Dendritic cell treated with granulocyte-macrophage colony-stimulating factor and Interleukin-4, amounts not matched to agents 40 ng/mL and 50 ng/mL, for 4 days (primary cell): ENCODE measurements at regions of chr17 and their contacts with region 1.

Region 1: GRCh38 chr17:62963289-62963688 is 2.7 kb upstream of the TANC2 start:
- H3K4me3 Mint-ChIP-seq: no peak overlapping the region
- H3K27ac Mint-ChIP-seq: no peak overlapping the region
- H3K4me1 Mint-ChIP-seq: peaks cover 22% of the 10 kb centered on the region
- H3K27me3 Mint-ChIP-seq: peaks cover 14% of the 10 kb centered on the region

Region 2: DNA sequence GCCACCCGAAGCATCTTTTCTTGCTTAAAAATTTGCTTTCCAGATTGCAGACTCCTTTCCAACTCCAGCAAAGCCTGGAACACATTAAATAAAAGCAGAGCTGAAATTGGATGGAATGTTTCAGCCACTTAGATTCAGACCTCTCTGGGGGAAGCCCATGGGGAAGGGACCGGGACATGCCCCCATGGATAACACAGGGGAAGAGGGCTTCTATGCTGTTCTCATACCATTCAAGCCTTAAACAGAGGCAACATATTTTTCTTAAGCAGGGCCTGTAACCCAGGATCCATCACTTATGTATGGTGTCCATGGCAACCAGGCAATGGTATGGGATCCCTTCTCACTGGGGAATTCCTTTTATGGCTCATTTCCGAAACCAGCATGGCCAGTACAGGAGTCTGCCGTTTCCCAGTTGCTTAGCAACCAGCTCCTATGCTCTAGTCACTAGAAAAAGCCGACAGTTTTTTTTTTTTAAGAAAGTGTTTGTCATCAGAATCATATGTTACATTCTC is 93.2 kb before region 1 on chr17:
- intact Hi-C with region 1: no loop called
- H3K4me3 Mint-ChIP-seq: no peak overlapping the region
- H3K27ac Mint-ChIP-seq: no peak overlapping the region
- H3K4me1 Mint-ChIP-seq: peaks cover 4% of the 10 kb centered on the region
- H3K27me3 Mint-ChIP-seq: peaks cover 1% of the 10 kb centered on the region

Region 3: GRCh38 chr17:62898220-62898864 is 64.9 kb before region 1 on chr17:
- intact Hi-C with region 1: loop called (anchors 5 kb)
- H3K4me3 Mint-ChIP-seq: no peak overlapping the region
- H3K27ac Mint-ChIP-seq: peak overlapping the region; percentile 75
- H3K4me1 Mint-ChIP-seq: peaks cover 54% of the 10 kb centered on the region
- H3K27me3 Mint-ChIP-seq: peaks cover 2% of the 10 kb centered on the region